ENCODE measurements at regions of chr17 and their contacts with region 1.

Region 1: DNA sequence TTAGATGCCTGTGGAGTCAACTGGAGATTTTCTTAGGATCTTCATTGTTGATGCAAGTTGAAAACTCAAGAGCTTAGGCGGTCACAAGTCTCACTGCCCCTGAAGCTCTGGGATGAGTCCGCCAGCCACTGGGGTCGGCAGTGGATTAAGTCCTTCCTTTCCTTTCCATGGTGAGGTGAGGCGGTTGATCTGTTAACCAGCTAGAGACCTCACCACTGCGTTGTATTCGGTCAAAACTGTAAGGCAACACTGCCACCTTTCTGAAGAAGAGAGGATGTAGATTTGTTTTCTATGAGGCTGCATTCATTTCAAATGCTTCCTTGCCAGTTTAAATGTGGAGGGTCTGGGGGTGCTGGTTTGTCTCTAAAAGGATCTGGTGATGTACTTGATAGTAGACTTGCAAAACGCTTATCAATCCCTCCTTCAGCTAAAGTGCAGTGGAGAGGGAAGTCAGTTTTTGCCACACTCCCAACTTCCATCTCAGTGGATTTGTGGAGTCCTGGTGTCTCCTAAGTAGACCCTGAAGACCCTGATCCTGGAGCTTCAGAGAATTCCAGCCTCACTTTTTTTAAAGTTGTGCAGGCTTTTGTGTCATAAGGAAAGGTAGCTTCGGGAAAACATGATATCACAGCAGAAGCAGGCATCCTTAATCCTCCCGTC is 1.7 kb downstream of the MYOCD start:
- DNase-seq: no peak
- ATAC-seq: no peak
- H3K4me3 ChIP-seq: no peak overlapping the region
- H3K4me3 Mint-ChIP-seq: no peak overlapping the region
- H3K27ac ChIP-seq: no peak overlapping the region
- H3K27ac Mint-ChIP-seq: no peak overlapping the region
- H3K4me1 ChIP-seq: peaks cover 5 to 8% of the 10 kb centered on the region in 2 donors
- H3K4me1 Mint-ChIP-seq: peaks cover 9% of the 10 kb centered on the region
- H3K27me3 ChIP-seq: peaks cover 0 to 27% (median 17%) of the 10 kb centered on the region in 4 experiments
- H3K27me3 Mint-ChIP-seq: peaks cover 55% of the 10 kb centered on the region
- CTCF ChIP-seq: no peak

Region 2: DNA sequence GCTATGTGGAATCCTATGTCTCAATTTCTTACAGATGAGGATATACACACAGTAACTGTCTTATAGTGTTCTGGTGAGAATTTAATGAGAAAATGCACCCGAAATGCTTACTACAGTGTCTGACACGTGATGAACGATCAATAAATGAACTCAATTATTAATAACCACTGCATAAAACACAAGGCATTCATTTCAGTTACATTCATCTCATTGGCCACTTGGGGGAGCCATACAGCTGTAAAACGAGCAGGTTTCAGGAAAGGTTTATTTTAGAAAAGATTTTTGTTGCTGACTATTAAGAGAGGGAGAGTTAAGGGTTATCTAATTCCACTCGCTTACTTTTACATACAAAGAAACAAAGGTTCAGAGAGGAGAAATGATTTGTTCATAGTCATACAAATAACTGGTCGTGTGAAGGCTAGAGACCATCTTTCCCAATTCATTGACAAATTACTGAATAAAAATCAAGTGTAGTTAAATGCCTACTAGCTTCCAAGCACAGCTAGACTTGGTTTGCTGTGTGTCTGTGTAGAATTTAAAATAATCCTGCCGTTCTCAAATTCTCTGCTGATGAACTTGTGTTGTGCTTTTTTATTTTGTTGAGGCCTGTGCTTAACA is 486.7 kb before region 1 on chr17:
- CTCF ChIA-PET with region 1: interaction called, 10 read pairs
- POLR2A ChIA-PET with region 1: no interaction called
- intact Hi-C with region 1: no loop called
- DNase-seq: peak; percentile 17
- ATAC-seq: peak; percentile 24
- H3K4me3 ChIP-seq: no peak overlapping the region
- H3K4me3 Mint-ChIP-seq: no peak overlapping the region
- H3K27ac ChIP-seq: no peak overlapping the region
- H3K27ac Mint-ChIP-seq: no peak overlapping the region
- H3K4me1 ChIP-seq: no peaks in the 10 kb centered on the region
- H3K4me1 Mint-ChIP-seq: no peaks in the 10 kb centered on the region
- H3K27me3 ChIP-seq: no peaks in the 10 kb centered on the region
- H3K27me3 Mint-ChIP-seq: no peaks in the 10 kb centered on the region
- CTCF ChIP-seq: peak; percentile 78

Region 3: DNA sequence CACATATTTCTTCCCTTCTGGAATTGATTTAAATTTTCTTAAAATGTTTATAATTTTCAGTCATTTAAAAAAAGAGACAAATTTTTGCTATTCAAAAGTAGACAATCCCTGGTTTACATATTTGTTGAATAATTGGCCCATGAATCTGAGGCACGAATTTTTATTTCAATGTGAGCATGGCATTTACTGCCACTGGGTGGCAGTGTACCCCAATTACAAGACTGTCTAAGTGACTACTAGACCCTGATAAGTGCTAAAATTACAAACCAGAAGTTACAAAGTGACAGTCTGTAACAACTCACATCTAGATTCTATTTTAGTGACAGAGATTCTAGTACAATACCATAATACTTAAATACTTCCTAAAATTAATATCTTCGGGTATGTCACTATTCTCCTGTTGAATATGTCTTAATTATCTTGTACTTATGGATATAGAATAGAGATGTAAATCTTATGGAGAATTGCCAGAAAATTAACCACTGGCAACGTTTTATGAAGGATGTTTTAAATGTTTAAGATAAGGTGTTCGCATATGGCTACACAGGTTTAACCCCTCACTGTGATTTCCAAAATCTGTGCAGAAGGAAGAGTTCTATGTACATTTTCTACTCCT is 410.9 kb before region 1 on chr17:
- CTCF ChIA-PET with region 1: interaction called, 44 read pairs
- POLR2A ChIA-PET with region 1: no interaction called
- intact Hi-C with region 1: no loop called
- DNase-seq: peak; percentile 37
- ATAC-seq: peak; percentile 51
- H3K4me3 ChIP-seq: no peak overlapping the region
- H3K4me3 Mint-ChIP-seq: no peak overlapping the region
- H3K27ac ChIP-seq: no peak overlapping the region
- H3K27ac Mint-ChIP-seq: no peak overlapping the region
- H3K4me1 ChIP-seq: no peaks in the 10 kb centered on the region
- H3K4me1 Mint-ChIP-seq: no peaks in the 10 kb centered on the region
- H3K27me3 ChIP-seq: no peaks in the 10 kb centered on the region
- H3K27me3 Mint-ChIP-seq: peaks cover 3% of the 10 kb centered on the region
- CTCF ChIP-seq: peak; percentile 73

Region 4: DNA sequence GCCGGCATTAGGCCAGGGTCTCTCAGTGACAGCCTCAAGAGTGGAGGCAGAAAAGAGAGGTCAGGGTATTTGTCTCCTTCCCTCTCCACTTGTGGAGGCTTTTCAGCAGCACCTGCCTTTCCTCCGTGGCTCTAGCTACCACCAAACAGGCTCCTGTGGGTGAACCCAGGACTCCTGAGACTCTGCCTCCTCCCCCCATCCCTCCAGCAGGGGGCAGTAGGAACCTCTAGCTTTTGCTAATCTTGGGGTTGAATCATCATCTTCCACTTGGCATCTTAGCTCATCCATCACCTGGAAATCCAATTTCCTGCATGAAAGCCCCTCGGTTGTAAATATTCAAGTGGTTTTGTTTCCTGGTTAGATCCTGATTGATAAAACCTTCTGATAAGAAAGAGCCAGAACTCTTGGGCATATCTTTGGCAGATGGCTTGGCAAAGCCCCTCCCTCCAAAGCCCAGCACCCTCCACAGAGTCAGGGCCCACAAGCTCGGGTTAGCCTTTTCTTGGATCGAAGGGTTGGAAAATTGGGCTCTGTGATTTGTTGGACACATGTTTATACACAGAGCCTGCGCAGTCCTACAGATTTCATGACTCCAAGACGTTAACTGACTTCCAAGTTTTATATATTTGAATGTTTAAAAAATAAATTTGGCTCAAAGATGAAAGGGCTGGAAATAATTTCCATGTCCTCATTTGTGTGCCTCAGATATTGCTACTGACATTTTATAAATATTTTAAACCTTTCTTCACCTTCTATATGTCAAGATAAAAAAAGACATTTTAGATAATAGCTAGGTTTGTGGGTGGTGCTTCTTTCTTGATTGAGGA is 324.6 kb before region 1 on chr17:
- CTCF ChIA-PET with region 1: interaction called, 9 read pairs
- POLR2A ChIA-PET with region 1: no interaction called
- intact Hi-C with region 1: loop called (anchors 2 kb)
- DNase-seq: no peak
- ATAC-seq: no peak
- H3K4me3 ChIP-seq: no peak overlapping the region
- H3K4me3 Mint-ChIP-seq: no peak overlapping the region
- H3K27ac ChIP-seq: no peak overlapping the region
- H3K27ac Mint-ChIP-seq: no peak overlapping the region
- H3K4me1 ChIP-seq: no peaks in the 10 kb centered on the region
- H3K4me1 Mint-ChIP-seq: no peaks in the 10 kb centered on the region
- H3K27me3 ChIP-seq: no peaks in the 10 kb centered on the region
- H3K27me3 Mint-ChIP-seq: no peaks in the 10 kb centered on the region
- CTCF ChIP-seq: peak; percentile 24

Region 5: GRCh38 chr17:12395733-12396354 is 271.6 kb before region 1 on chr17:
- CTCF ChIA-PET with region 1: interaction called, 10 read pairs
- POLR2A ChIA-PET with region 1: no interaction called
- intact Hi-C with region 1: no loop called
- DNase-seq: no peak
- ATAC-seq: no peak
- H3K4me3 ChIP-seq: no peak overlapping the region
- H3K4me3 Mint-ChIP-seq: no peak overlapping the region
- H3K27ac ChIP-seq: no peak overlapping the region
- H3K27ac Mint-ChIP-seq: no peak overlapping the region
- H3K4me1 ChIP-seq: no peaks in the 10 kb centered on the region
- H3K4me1 Mint-ChIP-seq: no peaks in the 10 kb centered on the region
- H3K27me3 ChIP-seq: no peaks in the 10 kb centered on the region
- H3K27me3 Mint-ChIP-seq: no peaks in the 10 kb centered on the region
- CTCF ChIP-seq: peak; percentile 37

Region 6: DNA sequence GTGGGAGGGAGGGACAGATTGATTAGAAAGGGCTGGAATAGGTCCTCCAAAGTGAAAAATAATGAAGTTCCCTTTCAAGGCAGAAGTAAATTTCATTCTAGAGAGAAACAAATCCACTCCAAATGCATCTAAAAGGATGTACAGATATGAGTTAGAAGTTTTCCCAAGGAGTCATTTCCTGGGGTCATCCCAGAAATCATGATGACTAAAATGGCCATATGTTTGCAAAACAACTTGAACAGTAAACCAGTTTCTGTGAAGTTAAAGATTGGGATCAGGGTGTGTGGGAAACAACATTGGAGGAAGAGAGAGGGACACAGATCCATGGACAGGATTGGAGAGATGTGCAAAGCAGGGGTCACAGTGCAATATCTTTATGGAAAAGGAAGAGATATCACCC is 89.4 kb after region 1 on chr17:
- CTCF ChIA-PET with region 1: no interaction called
- POLR2A ChIA-PET with region 1: no interaction called
- intact Hi-C with region 1: no loop called
- DNase-seq: no peak
- ATAC-seq: no peak
- H3K4me3 ChIP-seq: no peak overlapping the region
- H3K4me3 Mint-ChIP-seq: no peak overlapping the region
- H3K27ac ChIP-seq: no peak overlapping the region
- H3K27ac Mint-ChIP-seq: no peak overlapping the region
- H3K4me1 ChIP-seq: no peaks in the 10 kb centered on the region
- H3K4me1 Mint-ChIP-seq: no peaks in the 10 kb centered on the region
- H3K27me3 ChIP-seq: no peaks in the 10 kb centered on the region
- H3K27me3 Mint-ChIP-seq: peaks cover 4% of the 10 kb centered on the region
- CTCF ChIP-seq: no peak

Measured in B cell (primary cell).